SK-N-SH (cell line): ENCODE measurements at regions of chr3 and their contacts with region 1.

Region 1: GRCh38 chr3:44648564-44649229 is at the start of gene ZNF35:
- DNase-seq: peak; percentile 90
- H3K4me3 ChIP-seq: peak within 1 kb of the TSS; percentile 93 to 99
- H3K27ac ChIP-seq: peak within 1 kb of the TSS; percentile 69 to 89
- H3K4me1 ChIP-seq: no peaks in the 10 kb centered on the region; a peak in 2 of 4 replicates
- H3K27me3 ChIP-seq: no peaks in the 10 kb centered on the region
- CTCF ChIP-seq: no peak
- EP300 ChIP-seq: no peak
- RAD21 ChIP-seq: peak; percentile 14; the same call in 1 of the 2 replicates
- polyA plus RNA-seq, gene ZNF35: 2.4 and 4.5 TPM in 2 replicates

Region 2: DNA sequence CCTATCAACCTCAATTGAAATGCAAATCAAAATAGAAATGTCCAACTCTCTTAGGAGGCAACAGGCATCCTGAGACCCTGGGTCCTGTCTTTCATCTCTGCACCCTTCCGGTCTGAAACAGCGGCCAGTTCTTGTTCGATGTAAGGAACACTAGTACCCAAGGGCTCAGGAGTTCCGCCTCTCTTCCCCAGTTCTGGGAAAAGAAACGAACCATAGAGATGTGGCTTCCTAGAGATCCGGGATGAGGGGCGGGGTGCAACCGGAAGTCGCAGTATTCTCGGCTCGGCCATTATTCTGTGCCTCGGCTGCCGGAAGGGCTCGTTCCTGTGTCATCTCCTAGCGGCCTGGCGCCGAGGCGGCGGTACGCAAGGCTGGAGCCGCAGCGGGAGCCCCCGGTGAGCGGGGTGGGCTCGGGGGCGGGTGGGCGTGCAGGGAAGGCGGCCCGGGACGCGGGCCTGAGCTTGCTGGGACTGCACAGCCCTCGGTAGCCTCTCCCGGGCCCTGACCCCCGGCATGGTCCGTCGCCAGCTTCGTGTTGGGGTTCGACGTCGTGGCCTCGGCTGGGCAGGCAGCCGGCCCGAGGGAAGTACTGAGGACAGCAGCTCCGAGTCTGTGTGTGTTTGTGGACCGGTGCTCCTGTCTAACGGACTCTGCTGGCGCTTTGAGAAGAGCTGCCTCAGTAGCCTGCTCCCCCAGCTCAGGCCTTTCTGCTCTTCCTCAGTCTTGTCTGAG is 23.8 kb before region 1 on chr3 and contains the start of gene ZNF197:
- CTCF ChIA-PET with region 1: interaction called, 5 read pairs
- POLR2A ChIA-PET with region 1: interaction called, 16 read pairs
- DNase-seq: peak; percentile 90
- H3K4me3 ChIP-seq: peak within 1 kb of the TSS; percentile 76 to 90
- H3K27ac ChIP-seq: peak within 1 kb of the TSS; percentile 71 to 92
- H3K4me1 ChIP-seq: peaks cover 7 to 9% of the 10 kb centered on the region in 2 experiments; a peak in 3 of 4 replicates
- H3K27me3 ChIP-seq: no peaks in the 10 kb centered on the region
- CTCF ChIP-seq: no peak
- EP300 ChIP-seq: no peak
- RAD21 ChIP-seq: 0 out of 2 replicates have a peak, but pooled peaks have one; percentile 14
- polyA plus RNA-seq, gene ZNF197: 4.3 and 5.2 TPM in 2 replicates